ENCODE measurements at regions of chr3 and their contacts with region 1.

Region 1: DNA sequence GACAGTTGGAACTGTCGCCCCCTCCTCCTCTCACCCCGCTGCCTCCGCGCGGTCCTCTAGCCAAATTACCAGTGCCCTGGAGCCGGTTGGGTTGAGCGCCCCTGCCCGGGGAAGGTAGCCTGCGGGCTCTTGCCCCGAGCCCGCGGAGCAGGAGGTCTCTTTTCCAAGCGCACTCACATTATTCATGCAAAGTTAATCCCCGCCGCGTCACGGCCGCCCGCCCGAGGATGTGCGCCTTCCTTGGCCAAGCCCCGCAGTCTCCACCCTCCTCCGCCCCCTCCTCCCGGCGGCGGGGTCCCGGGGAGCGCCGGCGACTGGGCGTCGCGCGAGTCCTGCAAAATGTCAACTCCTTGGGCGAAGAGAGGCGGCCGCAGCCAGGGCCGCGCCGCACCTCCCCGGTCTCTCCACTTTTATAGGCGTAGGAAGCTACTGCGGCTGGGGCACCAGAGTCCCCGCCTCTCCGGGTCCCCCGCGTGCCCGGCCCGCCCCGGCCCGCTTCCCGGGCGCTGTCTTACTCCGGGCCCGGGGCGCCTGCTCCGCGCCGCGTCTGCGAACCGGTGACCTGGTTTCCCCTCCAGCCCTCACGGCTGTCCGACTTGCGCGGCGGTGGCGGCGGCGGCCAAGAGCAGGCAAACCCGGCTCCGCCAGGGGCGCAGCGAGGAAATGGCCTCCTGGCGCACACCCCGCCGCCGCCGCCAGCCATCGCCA is at the start of gene THRB:
- DNase-seq: peak; percentile 80 to 87
- H3K4me3 ChIP-seq: peak within 1 kb of the TSS; percentile 88
- H3K4me3 Mint-ChIP-seq: peak within 1 kb of the TSS; percentile 95
- H3K27ac Mint-ChIP-seq: peak within 1 kb of the TSS; percentile 95
- H3K4me1 ChIP-seq: peaks cover 10% of the 10 kb centered on the region
- H3K4me1 Mint-ChIP-seq: no peaks in the 10 kb centered on the region
- H3K27me3 ChIP-seq: no peaks in the 10 kb centered on the region
- H3K27me3 Mint-ChIP-seq: no peaks in the 10 kb centered on the region
- CTCF ChIP-seq: peak; percentile 18 to 26
- total RNA-seq, gene THRB: 17.5 and 19.4 TPM in 2 replicates

Region 2: DNA sequence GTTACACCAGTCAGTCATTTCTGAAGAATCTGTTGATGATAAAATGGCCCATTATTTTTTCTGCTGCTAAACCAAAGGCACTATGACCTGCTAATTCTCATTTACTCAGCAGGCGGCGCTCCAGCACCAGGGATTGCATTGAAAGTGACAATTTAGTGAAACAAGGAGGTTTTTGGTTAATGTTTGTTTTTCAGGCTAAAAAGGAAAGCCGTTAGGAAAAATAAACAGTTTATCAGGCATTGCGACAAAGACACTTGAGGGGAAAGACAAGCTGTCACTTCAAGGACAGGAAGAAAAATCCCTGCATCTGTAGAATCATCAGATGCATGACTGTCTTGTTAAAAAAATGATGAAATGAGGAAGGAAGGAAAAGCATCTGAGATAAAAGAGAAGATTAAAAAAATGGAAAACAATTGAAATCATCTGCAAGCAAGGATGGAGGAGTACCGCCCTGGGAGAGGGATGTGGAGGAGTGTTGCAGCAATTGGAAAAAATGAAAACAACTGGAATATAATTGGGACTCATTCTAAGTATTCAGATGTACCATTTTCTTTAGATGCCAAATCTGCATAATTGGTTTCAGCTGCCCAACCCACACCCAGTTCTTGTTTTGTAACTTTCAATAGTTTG is 495.6 kb before region 1 on chr3:
- CTCF ChIA-PET with region 1: no interaction called
- POLR2A ChIA-PET with region 1: no interaction called
- intact Hi-C with region 1: loop called (anchors 5 kb)
- DNase-seq: peak; percentile 60 to 77
- H3K4me3 ChIP-seq: no peak overlapping the region
- H3K4me3 Mint-ChIP-seq: no peak overlapping the region
- H3K27ac Mint-ChIP-seq: no peak overlapping the region
- H3K4me1 ChIP-seq: no peaks in the 10 kb centered on the region
- H3K4me1 Mint-ChIP-seq: peaks cover 5% of the 10 kb centered on the region
- H3K27me3 ChIP-seq: no peaks in the 10 kb centered on the region
- H3K27me3 Mint-ChIP-seq: no peaks in the 10 kb centered on the region
- CTCF ChIP-seq: peak; percentile 83 to 90

Region 3: GRCh38 chr3:24359645-24360462 is 134.9 kb before region 1 on chr3:
- CTCF ChIA-PET with region 1: interaction called, 6 read pairs
- POLR2A ChIA-PET with region 1: no interaction called
- intact Hi-C with region 1: loop called (anchors 1 kb)
- DNase-seq: peak in 1 of 2 experiments; percentile 12
- H3K4me3 ChIP-seq: no peak overlapping the region
- H3K4me3 Mint-ChIP-seq: no peak overlapping the region
- H3K27ac Mint-ChIP-seq: no peak overlapping the region
- H3K4me1 ChIP-seq: peaks cover 17% of the 10 kb centered on the region
- H3K4me1 Mint-ChIP-seq: peaks cover 11% of the 10 kb centered on the region
- H3K27me3 ChIP-seq: no peaks in the 10 kb centered on the region
- H3K27me3 Mint-ChIP-seq: no peaks in the 10 kb centered on the region
- CTCF ChIP-seq: peak in 1 of 2 experiments; percentile 40

Region 4: DNA sequence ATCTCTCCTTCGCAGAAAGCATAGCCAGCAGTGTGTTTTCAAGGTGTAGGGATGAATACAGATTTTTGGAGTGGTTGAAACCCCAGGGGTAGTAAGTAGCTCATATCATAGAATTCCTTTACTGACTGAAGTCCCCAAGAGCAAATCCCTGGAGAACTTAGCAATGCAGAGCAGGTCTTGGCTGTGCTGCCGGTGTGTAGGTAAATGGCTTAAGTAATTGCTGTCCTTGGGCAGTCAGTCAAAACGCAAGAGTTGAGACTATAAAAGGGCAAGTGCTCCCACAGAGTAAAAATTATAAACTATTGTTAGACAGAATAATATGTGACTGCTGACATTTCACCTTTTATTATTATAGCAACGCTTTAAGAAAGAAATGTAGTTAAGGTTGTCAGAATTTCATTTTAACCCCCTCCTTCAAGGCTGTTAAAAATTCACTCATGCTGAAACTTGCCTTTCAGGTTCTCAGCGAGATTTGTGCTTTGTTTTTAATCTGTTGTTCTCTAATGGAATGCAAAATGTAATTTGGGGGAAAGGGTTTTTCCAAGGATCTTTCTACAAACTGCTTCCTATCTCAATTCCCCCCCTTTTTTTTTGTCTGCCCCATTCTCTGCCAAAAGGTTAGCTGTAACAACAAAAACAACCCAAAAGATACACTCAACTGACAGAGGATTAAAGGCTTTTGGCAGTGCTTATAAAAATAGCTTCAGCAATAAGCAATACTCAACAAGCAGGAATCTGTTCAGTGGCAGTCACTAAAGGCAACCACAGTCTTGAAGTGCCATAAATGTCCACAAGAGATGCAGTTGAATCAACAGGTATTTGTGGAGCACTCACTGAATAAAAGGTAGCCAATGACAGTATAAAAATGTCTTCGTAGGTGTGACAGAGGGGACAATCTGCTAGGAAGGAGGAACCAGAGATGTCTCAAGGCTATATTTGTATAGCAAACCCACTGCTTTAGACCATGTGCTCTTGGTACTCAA is 105.4 kb before region 1 on chr3:
- CTCF ChIA-PET with region 1: no interaction called
- POLR2A ChIA-PET with region 1: no interaction called
- intact Hi-C with region 1: loop called (anchors 5 kb)
- DNase-seq: no peak
- H3K4me3 ChIP-seq: no peak overlapping the region
- H3K4me3 Mint-ChIP-seq: no peak overlapping the region
- H3K27ac Mint-ChIP-seq: no peak overlapping the region
- H3K4me1 ChIP-seq: peaks cover 30% of the 10 kb centered on the region
- H3K4me1 Mint-ChIP-seq: peaks cover 7% of the 10 kb centered on the region
- H3K27me3 ChIP-seq: no peaks in the 10 kb centered on the region
- H3K27me3 Mint-ChIP-seq: no peaks in the 10 kb centered on the region
- CTCF ChIP-seq: no peak

Region 5: DNA sequence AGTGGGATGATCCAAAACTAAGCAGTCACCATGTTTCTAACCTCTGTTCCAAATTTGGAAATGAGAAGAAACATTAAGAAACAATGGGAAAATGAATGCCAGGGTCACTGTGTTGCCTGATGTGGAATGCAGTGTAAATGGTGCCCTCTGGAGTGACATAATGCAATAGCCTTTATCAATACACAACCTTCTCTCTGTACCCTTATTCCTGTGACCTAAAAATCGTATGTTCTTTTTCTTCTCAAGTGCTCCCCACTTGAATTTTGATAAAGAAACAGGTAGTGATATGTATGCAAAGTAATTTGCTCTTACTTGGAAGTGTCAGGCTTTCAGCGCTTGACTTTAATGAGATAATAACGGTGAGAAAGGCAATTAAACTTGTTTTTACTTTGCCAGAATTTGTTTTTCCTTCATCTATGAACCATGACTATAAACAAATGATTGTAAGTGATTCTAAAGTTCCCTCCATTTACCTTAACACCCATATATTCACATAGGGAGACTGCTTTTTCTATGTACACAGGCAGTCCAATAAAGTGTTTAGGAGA is 145.6 kb after region 1 on chr3:
- CTCF ChIA-PET with region 1: no interaction called
- POLR2A ChIA-PET with region 1: no interaction called
- intact Hi-C with region 1: loop called (anchors 1 kb)
- DNase-seq: peak in 1 of 2 experiments; percentile 32
- H3K4me3 ChIP-seq: no peak overlapping the region
- H3K4me3 Mint-ChIP-seq: no peak overlapping the region
- H3K27ac Mint-ChIP-seq: peak overlapping the region; percentile 60
- H3K4me1 ChIP-seq: peaks cover 29% of the 10 kb centered on the region
- H3K4me1 Mint-ChIP-seq: peaks cover 15% of the 10 kb centered on the region
- H3K27me3 ChIP-seq: no peaks in the 10 kb centered on the region
- H3K27me3 Mint-ChIP-seq: no peaks in the 10 kb centered on the region
- CTCF ChIP-seq: peak; percentile 49 to 69

Region 6: DNA sequence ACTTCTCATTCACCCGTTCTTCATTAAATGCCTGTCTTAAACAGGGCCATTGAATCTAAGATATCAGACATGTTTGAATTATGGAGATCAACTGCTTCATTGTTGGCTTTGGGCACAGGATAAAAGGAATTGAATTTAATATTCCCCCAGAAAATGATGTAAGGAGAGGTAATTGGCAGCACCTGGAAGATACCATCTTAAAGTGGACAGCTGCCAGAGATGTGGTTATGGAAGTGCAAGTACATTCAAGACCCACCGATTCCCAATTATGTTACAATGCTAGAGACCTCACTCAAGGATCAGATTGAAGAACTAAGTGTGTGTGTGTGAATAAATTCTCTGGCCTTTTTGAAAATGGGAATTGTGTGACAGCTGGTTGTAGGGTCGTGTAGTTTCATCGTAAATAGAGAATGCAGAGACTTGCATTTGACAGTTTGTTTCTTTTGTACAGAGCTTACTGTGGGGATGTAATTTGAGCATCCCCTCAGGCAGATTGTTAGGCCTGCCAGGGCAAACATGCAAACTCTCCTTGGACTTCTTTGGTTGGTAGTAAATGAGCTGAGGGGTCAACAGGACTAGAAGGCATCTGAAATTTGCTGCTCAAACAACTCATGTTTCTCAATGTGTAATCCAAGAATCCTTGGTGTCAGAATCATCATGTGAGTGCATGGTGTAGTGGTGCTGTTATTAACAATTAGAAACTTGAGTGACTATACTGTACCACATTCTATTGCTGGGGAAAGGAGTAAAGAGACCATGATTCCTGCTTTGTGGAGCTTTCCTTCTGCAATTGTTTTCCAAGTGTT is 359.1 kb after region 1 on chr3:
- CTCF ChIA-PET with region 1: no interaction called
- POLR2A ChIA-PET with region 1: interaction called, 14 read pairs
- intact Hi-C with region 1: no loop called
- DNase-seq: no peak
- H3K4me3 ChIP-seq: no peak overlapping the region
- H3K4me3 Mint-ChIP-seq: no peak overlapping the region
- H3K27ac Mint-ChIP-seq: no peak overlapping the region
- H3K4me1 ChIP-seq: no peaks in the 10 kb centered on the region
- H3K4me1 Mint-ChIP-seq: no peaks in the 10 kb centered on the region
- H3K27me3 ChIP-seq: no peaks in the 10 kb centered on the region; the same call in 1 of the 2 replicates
- H3K27me3 Mint-ChIP-seq: peaks cover 4% of the 10 kb centered on the region
- CTCF ChIP-seq: no peak

Measured in Caco-2 (cell line).